Activated CD4-positive, alpha-beta T cell treated with anti-CD3 and anti-CD28 coated beads for 36 hours (primary cell): ENCODE measurements at regions of chr6 and their contacts with region 1.

Region 1: GRCh38 chr6:138477913-138478539 is 21.3 kb downstream of the NHSL1 start:
- DNase-seq: no peak
- ATAC-seq: no peak
- H3K4me3 Mint-ChIP-seq: no peak overlapping the region
- H3K27ac Mint-ChIP-seq: no peak overlapping the region
- H3K4me1 Mint-ChIP-seq: no peaks in the 10 kb centered on the region
- H3K27me3 Mint-ChIP-seq: no peaks in the 10 kb centered on the region

Region 2: DNA sequence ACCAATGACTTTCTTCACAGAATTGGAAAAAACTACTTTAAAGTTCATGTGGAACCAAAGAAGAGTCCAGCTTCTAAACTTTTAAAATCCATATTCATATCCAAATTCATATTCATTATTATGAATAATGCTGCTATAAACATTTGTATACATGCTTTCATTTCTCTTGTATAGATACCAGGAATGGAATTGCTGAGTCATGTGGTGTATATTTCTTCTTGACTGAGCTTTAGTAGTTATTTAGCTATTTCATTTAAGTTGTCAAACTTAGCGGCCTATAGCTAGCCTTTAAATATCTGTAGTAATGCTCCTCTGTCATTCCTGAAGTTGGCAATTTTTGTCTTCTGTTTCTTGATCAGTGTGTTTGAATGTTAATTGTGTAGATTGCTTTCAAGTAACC is 120.1 kb before region 1 on chr6:
- CTCF ChIA-PET with region 1: no interaction called
- POLR2A ChIA-PET with region 1: no interaction called
- intact Hi-C with region 1: no loop called
- DNase-seq: no peak
- ATAC-seq: no peak
- H3K4me3 Mint-ChIP-seq: no peak overlapping the region
- H3K27ac Mint-ChIP-seq: no peak overlapping the region
- H3K4me1 Mint-ChIP-seq: no peaks in the 10 kb centered on the region
- H3K27me3 Mint-ChIP-seq: peaks cover 17% of the 10 kb centered on the region

Region 3: GRCh38 chr6:138434925-138435324 is 43.1 kb before region 1 on chr6:
- CTCF ChIA-PET with region 1: no interaction called
- POLR2A ChIA-PET with region 1: no interaction called
- intact Hi-C with region 1: loop called in 1 of 2 experiments (anchors 5 kb)
- DNase-seq: no peak
- ATAC-seq: no peak
- H3K4me3 Mint-ChIP-seq: no peak overlapping the region
- H3K27ac Mint-ChIP-seq: no peak overlapping the region
- H3K4me1 Mint-ChIP-seq: no peaks in the 10 kb centered on the region
- H3K27me3 Mint-ChIP-seq: no peaks in the 10 kb centered on the region